ENCODE measurements at regions of chr2 and their contacts with region 1.

Region 1: GRCh38 chr2:240560480-240561326 is 546 bp downstream of the DUSP28 start:
- DNase-seq: peak; percentile 99
- H3K4me3 Mint-ChIP-seq: peak overlapping the region; percentile 90
- H3K27ac Mint-ChIP-seq: peak overlapping the region; percentile 95
- H3K4me1 Mint-ChIP-seq: peaks cover 75% of the 10 kb centered on the region
- H3K27me3 Mint-ChIP-seq: no peaks in the 10 kb centered on the region

Region 2: DNA sequence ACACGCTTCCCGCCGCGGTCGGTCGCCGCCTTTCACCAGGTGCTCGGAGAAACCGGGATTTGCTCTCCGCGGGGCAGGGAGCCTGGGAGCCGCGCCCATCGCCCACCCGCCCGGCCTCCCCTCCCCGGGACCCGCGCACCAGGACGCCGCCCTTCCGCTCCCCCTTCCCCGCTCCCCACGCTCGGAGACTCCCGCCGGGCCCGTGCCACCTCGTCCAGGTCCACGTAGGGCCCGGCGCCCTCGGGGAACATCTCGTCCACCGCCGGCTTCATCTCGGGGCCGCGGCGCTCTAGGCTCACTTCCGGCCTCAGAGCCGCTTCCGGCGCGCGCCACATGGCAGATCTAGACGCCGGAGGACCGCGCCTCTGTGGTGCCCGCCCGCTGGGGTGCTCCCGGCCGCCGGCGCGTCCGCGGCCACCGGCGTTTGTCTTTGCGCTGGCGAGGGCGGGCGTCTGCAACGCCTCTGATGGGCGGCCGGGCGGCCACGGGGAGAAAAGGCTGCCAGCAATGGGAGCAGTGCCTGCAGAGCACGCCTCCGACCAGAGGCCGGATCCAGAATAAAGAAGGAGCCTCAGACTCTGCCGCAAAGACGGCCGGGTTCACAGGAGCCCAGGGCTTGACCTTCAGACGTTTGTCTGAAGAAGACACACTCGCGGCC is 424.6 kb before region 1 on chr2 and contains the start of gene COPS9:
- intact Hi-C with region 1: loop called (anchors 10 kb)
- DNase-seq: peak; percentile 85
- H3K4me3 Mint-ChIP-seq: peak within 1 kb of the TSS; percentile 92
- H3K27ac Mint-ChIP-seq: peak within 1 kb of the TSS; percentile 84
- H3K4me1 Mint-ChIP-seq: peaks cover 25% of the 10 kb centered on the region
- H3K27me3 Mint-ChIP-seq: peaks cover 6% of the 10 kb centered on the region
- total RNA-seq, gene COPS9: 127 and 132 TPM in 2 replicates

Region 3: GRCh38 chr2:240513549-240514287 is 47.0 kb before region 1 on chr2:
- intact Hi-C with region 1: loop called (anchors 1 kb)
- DNase-seq: peak; percentile 74
- H3K4me3 Mint-ChIP-seq: no peak overlapping the region
- H3K27ac Mint-ChIP-seq: peak overlapping the region; percentile 9
- H3K4me1 Mint-ChIP-seq: peaks cover 9% of the 10 kb centered on the region
- H3K27me3 Mint-ChIP-seq: no peaks in the 10 kb centered on the region

Region 4: DNA sequence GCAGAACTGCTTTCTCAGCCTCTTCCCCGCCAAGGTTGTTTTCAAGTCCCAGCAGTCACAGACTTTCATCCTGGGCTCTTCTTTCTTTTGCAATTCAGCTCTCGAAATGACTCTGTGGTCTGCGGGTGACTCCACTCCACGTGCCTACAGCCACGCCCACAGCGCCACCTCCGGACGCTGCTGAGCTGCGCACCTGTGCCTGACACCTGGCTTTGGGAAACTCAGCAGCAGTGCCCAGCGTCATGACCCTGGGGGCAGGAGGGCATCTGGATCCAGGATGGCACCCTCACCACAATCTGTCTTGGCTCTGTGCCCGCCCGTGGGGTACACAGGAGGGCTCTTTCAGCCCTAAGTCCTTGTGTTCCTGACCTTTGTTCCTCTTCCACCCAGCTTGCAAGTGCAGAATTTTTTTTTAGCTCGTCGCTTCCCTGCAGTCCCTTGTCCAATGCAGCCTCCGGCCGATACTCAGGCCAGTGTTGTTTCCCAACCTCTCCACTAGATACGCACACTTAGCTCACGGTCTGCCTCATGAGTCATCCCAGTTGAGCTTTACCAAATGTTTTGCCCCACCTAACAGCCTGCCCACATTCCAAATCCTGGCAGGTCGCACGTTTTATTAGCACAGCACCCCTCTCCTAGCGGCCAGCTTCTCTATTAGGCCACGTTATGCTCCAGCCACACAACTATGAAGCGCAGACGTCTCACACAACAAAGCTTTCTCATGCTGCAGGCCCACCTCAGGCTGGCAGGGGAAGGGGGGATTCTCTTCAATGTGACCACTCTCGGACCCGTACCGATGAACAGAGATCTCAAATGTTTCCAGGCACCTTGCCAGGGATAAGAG is 19.3 kb after region 1 on chr2:
- intact Hi-C with region 1: no loop called
- DNase-seq: peak; percentile 55
- H3K4me3 Mint-ChIP-seq: peak overlapping the region; percentile 15
- H3K27ac Mint-ChIP-seq: peak overlapping the region; percentile 63
- H3K4me1 Mint-ChIP-seq: peaks cover 36% of the 10 kb centered on the region
- H3K27me3 Mint-ChIP-seq: no peaks in the 10 kb centered on the region

Region 5: GRCh38 chr2:240624950-240625621 is 64.4 kb after region 1 on chr2 and contains the start of gene GPR35:
- intact Hi-C with region 1: loop called (anchors 1 kb)
- DNase-seq: peak; percentile 76
- H3K4me3 Mint-ChIP-seq: peak within 1 kb of the TSS; percentile 69
- H3K27ac Mint-ChIP-seq: peak within 1 kb of the TSS; percentile 83
- H3K4me1 Mint-ChIP-seq: peaks cover 47% of the 10 kb centered on the region
- H3K27me3 Mint-ChIP-seq: no peaks in the 10 kb centered on the region
- total RNA-seq, gene GPR35: 7.6 and 8.2 TPM in 2 replicates

Region 6: GRCh38 chr2:241149925-241150659 is 589.4 kb after region 1 on chr2 and contains the start of gene PPP1R7:
- intact Hi-C with region 1: loop called (anchors 1 kb)
- DNase-seq: peak; percentile 91
- H3K4me3 Mint-ChIP-seq: peak within 1 kb of the TSS; percentile 95
- H3K27ac Mint-ChIP-seq: peak within 1 kb of the TSS; percentile 95
- H3K4me1 Mint-ChIP-seq: peaks cover 61% of the 10 kb centered on the region
- H3K27me3 Mint-ChIP-seq: no peaks in the 10 kb centered on the region
- total RNA-seq, gene PPP1R7: 115 and 118 TPM in 2 replicates